ENCODE measurements at regions of chr3 and their contacts with region 1.

Region 1: GRCh38 chr3:187738331-187739093 is 6.8 kb downstream of the BCL6 start:
- DNase-seq: peak; percentile 90
- H3K4me3 ChIP-seq: peak overlapping the region; percentile 70
- H3K27ac ChIP-seq: peak overlapping the region; percentile 58
- H3K4me1 ChIP-seq: peaks cover 29% of the 10 kb centered on the region
- H3K27me3 ChIP-seq: no peaks in the 10 kb centered on the region
- CTCF ChIP-seq: peak; percentile 87

Region 2: GRCh38 chr3:187858711-187859110 is 120.2 kb after region 1 on chr3:
- CTCF ChIA-PET with region 1: no interaction called
- POLR2A ChIA-PET with region 1: interaction called, 10 read pairs
- intact Hi-C with region 1: no loop called
- DNase-seq: no peak
- H3K4me3 ChIP-seq: no peak overlapping the region
- H3K27ac ChIP-seq: no peak overlapping the region
- H3K4me1 ChIP-seq: no peaks in the 10 kb centered on the region
- H3K27me3 ChIP-seq: no peaks in the 10 kb centered on the region
- CTCF ChIP-seq: no peak

Region 3: DNA sequence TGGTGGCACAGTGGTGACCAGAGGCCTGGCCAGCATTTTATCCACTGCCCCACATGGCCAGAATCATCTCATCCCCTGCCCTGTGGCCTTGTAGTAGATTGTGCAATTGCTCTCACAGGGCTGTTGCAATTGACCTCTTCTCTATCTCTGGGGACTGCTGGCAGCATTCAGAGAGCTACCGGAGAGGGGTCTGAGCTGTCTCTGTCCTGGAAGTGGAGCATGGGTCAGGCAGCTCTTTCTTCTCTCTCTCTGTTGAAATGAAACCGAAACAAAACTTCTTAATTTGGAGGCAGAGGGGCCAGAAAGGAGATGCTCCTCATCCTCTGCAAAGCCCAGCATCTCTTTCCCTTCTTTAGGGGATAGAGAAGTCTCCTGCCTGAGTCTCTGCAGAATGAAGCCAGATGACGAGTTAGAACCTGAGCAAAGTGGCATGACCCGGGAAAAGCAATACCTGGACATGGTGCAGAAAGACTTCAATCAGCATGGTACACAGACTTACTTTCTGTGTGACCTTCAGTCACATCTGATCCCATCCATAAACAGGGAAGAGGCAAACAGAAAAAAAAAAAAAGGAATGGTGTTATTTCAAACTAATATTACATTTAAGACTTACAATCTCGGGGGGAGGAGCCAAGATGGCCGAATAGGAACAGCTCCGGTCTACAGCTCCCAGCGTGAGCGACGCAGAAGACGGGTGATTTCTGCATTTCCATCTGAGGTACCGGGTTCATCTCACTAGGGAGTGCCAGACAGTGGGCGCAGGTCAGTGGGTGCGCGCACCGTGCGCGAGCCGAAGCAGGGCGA is 151.3 kb after region 1 on chr3:
- CTCF ChIA-PET with region 1: no interaction called
- POLR2A ChIA-PET with region 1: no interaction called
- intact Hi-C with region 1: no loop called
- DNase-seq: no peak
- H3K4me3 ChIP-seq: no peak overlapping the region
- H3K27ac ChIP-seq: no peak overlapping the region
- H3K4me1 ChIP-seq: no peaks in the 10 kb centered on the region
- H3K27me3 ChIP-seq: no peaks in the 10 kb centered on the region
- CTCF ChIP-seq: no peak

Region 4: DNA sequence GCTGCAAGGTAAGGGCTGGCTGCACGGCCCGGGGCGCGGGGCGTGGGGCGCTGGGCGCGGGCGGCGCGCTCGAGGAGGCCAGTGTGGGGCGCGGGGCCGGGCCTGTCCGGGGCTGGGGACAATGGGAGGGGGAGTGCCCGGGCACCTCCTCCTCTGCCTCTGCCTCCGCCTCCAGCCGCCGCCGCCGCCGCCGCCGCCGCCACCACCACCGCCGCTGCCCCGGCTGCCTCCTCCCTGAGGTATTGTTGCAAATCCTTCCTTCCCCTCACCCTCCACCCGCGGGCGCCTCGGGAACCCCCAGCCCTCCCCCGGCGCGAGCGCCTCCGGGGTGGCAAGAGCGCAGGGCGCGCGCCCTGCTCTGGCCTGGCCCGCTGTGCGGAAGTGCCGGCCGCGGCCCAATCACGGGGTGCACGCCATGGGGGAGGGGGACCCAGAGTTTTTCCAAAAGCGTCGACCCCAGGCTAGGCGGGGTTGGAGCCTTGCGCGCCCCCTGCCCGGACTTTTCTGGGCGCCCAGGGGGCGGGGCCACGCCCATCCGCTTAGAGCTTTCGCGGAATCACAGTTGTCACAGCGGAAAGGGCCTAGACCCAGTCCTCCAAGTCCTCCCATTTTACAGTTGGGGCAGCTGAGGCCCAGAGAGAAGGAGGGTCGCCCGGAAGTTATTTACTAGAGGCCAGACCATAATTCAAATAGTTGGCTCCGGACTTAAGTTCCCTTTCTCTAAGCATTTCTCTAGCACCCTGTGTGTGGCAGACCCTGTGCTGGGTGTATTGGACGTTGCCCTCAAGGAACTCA is 415.7 kb after region 1 on chr3 and contains the start of gene LPP:
- CTCF ChIA-PET with region 1: interaction called, 3 read pairs
- POLR2A ChIA-PET with region 1: no interaction called
- intact Hi-C with region 1: loop called (anchors 5 kb)
- DNase-seq: peak; percentile 78
- H3K4me3 ChIP-seq: peak within 1 kb of the TSS; percentile 64
- H3K27ac ChIP-seq: peak within 1 kb of the TSS; percentile 92
- H3K4me1 ChIP-seq: peaks cover 13% of the 10 kb centered on the region
- H3K27me3 ChIP-seq: no peaks in the 10 kb centered on the region
- CTCF ChIP-seq: no peak
- total RNA-seq, gene LPP: 39.7 and 40.6 TPM in 2 replicates

Region 5: GRCh38 chr3:189041482-189042090 is 1303.1 kb after region 1 on chr3:
- CTCF ChIA-PET with region 1: interaction called, 4 read pairs
- POLR2A ChIA-PET with region 1: no interaction called
- intact Hi-C with region 1: loop called (anchors 2 kb)
- DNase-seq: peak; percentile 70
- H3K4me3 ChIP-seq: no peak overlapping the region
- H3K27ac ChIP-seq: no peak overlapping the region
- H3K4me1 ChIP-seq: peaks cover 3% of the 10 kb centered on the region
- H3K27me3 ChIP-seq: no peaks in the 10 kb centered on the region
- CTCF ChIP-seq: peak; percentile 74

Region 6: GRCh38 chr3:189148081-189148507 is 1409.6 kb after region 1 on chr3:
- CTCF ChIA-PET with region 1: interaction called, 10 read pairs
- POLR2A ChIA-PET with region 1: no interaction called
- intact Hi-C with region 1: loop called (anchors 2 kb)
- DNase-seq: peak; percentile 75
- H3K4me3 ChIP-seq: no peak overlapping the region
- H3K27ac ChIP-seq: no peak overlapping the region
- H3K4me1 ChIP-seq: peaks cover 4% of the 10 kb centered on the region
- H3K27me3 ChIP-seq: no peaks in the 10 kb centered on the region
- CTCF ChIP-seq: peak; percentile 86

Region 7: GRCh38 chr3:189233225-189233858 is 1494.8 kb after region 1 on chr3:
- CTCF ChIA-PET with region 1: interaction called, 9 read pairs
- POLR2A ChIA-PET with region 1: no interaction called
- intact Hi-C with region 1: loop called (anchors 2 kb)
- DNase-seq: peak; percentile 83
- H3K4me3 ChIP-seq: no peak overlapping the region
- H3K27ac ChIP-seq: no peak overlapping the region
- H3K4me1 ChIP-seq: peaks cover 6% of the 10 kb centered on the region
- H3K27me3 ChIP-seq: no peaks in the 10 kb centered on the region
- CTCF ChIP-seq: peak; percentile 80